Naive thymus-derived CD4-positive, alpha-beta T cell (primary cell): ENCODE measurements at regions of chr2 and their contacts with region 1.

Region 1: DNA sequence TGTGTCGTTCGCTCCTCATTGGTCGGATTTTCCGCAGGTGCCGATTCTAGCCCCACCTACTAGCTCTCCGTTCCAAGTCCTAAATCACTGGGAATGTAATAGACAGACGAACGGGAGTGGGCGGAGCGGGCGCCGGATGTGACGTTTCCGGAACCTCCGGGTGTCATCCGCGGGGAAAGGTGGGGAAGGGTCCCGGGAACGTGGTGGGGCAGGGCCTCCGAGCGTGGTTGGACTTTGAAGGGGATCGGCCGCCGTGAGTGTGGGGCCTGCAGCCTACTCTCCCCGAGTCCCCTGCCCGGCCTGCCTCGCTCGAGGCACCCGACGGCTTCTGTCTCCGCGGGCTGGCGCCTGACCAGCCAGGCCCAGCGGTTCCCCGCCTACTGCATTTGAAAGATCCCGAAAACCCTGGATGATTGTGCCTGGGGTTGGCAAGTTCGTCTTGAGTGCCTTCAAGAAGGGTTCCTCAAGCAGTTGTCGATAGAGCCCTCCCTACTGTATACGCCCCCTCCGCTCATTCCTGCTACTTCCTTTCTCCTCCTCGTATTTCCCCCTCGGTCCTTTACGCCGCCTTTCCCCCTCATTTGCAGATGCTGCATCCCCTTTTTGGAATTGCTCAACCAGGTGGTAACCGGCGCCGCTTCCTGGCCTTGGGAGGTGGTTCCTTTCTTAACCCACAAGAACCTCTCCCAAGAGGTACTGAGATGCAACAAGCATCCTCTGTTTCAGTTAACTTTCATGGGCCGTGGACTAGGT is at the start of gene STAMBP:
- DNase-seq: peak; percentile 67 to 95 (median 86)
- ATAC-seq: peak; percentile 96
- H3K4me3 ChIP-seq: peak within 1 kb of the TSS; percentile 81
- H3K4me3 Mint-ChIP-seq: peak within 1 kb of the TSS; percentile 93 to 99 (median 97)
- H3K27ac ChIP-seq: peak within 1 kb of the TSS; percentile 97
- H3K27ac Mint-ChIP-seq: peak within 1 kb of the TSS; percentile 88 to 99 (median 95)
- H3K4me1 ChIP-seq: peaks cover 22 to 25% of the 10 kb centered on the region in 2 donors
- H3K4me1 Mint-ChIP-seq: peaks cover 24 to 58% (median 52%) of the 10 kb centered on the region in 7 donors
- H3K27me3 ChIP-seq: no peaks in the 10 kb centered on the region
- H3K27me3 Mint-ChIP-seq: peaks cover 0 to 3% (median 0%) of the 10 kb centered on the region in 5 donors
- total RNA-seq, gene STAMBP: 22.2 to 44.5 (median 32.9) TPM

Region 2: GRCh38 chr2:72008608-72009007 is 1820.4 kb before region 1 on chr2:
- CTCF ChIA-PET with region 1: no interaction called
- POLR2A ChIA-PET with region 1: no interaction called
- intact Hi-C with region 1: no loop called
- DNase-seq: no peak
- ATAC-seq: no peak
- H3K4me3 ChIP-seq: no peak overlapping the region
- H3K4me3 Mint-ChIP-seq: no peak overlapping the region
- H3K27ac ChIP-seq: no peak overlapping the region
- H3K27ac Mint-ChIP-seq: no peak overlapping the region
- H3K4me1 ChIP-seq: no peaks in the 10 kb centered on the region
- H3K4me1 Mint-ChIP-seq: no peaks in the 10 kb centered on the region
- H3K27me3 ChIP-seq: no peaks in the 10 kb centered on the region
- H3K27me3 Mint-ChIP-seq: peaks cover 0 to 25% (median 6%) of the 10 kb centered on the region in 5 donors

Region 3: DNA sequence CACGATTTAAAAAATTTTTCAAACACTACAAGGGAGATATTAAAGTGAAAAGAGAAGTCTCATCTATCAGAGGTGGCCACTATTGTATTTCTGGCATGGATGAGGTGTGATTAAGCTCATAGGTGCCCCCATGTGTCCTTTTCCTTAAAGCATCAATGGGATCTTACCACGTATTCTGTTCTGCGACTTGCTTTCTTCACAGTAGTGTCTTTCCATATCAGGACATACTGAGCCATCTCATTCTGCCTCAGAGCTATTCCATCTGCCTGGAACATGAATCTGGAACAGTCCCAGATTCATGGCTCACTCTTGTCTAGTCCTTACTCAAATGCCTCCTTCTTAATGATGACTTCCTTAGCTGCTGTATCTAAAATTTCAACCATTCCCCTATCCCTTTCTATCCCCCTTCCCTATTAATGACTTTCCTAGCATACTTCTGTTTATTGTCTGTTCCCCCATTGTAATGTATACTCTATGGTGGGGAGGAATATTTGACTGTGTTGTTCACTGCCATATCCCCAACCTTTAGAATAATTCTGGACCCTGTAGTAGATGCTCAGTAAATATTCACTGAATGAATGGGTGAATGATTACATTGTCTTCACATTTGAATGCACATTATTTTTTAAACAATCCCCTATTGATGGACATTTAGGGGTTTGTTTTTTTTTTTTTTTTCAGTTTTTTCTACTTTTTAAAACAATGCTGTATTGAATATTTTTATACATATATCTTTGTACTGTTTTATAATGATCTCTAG is 10.8 kb after region 1 on chr2:
- CTCF ChIA-PET with region 1: interaction called, 11 read pairs
- POLR2A ChIA-PET with region 1: interaction called, 4 read pairs
- intact Hi-C with region 1: no loop called
- DNase-seq: no peak
- ATAC-seq: no peak
- H3K4me3 ChIP-seq: no peak overlapping the region
- H3K4me3 Mint-ChIP-seq: no peak overlapping the region
- H3K27ac ChIP-seq: no peak overlapping the region
- H3K27ac Mint-ChIP-seq: no peak overlapping the region
- H3K4me1 ChIP-seq: no peaks in the 10 kb centered on the region
- H3K4me1 Mint-ChIP-seq: peaks cover 15 to 50% (median 28%) of the 10 kb centered on the region in 7 donors
- H3K27me3 ChIP-seq: no peaks in the 10 kb centered on the region
- H3K27me3 Mint-ChIP-seq: no peaks in the 10 kb centered on the region

Region 4: DNA sequence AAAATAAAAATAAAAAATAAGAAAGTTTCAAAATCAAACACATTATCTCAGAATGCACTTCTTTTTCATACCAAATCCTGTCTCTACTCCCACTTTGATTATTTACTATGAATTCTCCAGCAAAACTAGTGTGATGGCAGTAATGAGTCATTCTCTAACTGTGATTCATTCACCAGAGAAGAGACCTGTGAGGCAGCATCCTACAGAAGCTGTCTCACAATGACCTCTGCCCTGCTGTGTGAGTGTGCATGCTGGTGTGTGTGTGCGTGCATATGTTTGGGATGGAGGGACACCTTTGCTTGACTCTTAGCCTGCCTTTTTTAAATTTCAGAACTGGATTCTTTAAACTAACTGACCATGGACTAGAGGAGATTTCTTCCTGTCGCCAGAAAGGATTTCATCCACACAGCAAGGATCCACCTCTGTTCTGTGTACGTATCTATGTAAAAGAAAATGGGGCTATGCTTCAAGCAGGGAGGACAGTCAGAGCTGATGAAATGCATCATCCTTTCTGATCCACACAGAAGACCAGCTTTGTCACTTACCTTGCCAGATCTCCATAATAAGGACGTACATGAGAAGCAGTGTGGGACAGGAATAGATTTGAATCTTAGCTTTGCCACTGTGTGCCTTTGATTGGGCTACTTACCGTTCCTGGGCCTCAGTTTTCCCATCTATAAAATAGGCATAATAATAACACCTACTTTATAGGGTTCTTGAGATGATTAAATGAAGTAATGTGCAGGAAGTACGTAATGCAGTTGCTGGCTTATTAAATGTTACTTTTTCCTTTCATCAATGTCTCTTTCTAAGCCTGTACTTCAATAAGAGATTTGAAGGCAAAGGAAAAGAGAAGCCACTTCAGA is 31.0 kb after region 1 on chr2:
- CTCF ChIA-PET with region 1: no interaction called
- POLR2A ChIA-PET with region 1: no interaction called
- intact Hi-C with region 1: no loop called
- DNase-seq: peak in 1 of 9 donors; percentile 34
- ATAC-seq: no peak
- H3K4me3 ChIP-seq: no peak overlapping the region
- H3K4me3 Mint-ChIP-seq: no peak overlapping the region
- H3K27ac ChIP-seq: no peak overlapping the region
- H3K27ac Mint-ChIP-seq: no peak overlapping the region
- H3K4me1 ChIP-seq: no peaks in the 10 kb centered on the region
- H3K4me1 Mint-ChIP-seq: peaks cover 0 to 8% (median 0%) of the 10 kb centered on the region in 7 donors
- H3K27me3 ChIP-seq: no peaks in the 10 kb centered on the region
- H3K27me3 Mint-ChIP-seq: no peaks in the 10 kb centered on the region

Region 5: DNA sequence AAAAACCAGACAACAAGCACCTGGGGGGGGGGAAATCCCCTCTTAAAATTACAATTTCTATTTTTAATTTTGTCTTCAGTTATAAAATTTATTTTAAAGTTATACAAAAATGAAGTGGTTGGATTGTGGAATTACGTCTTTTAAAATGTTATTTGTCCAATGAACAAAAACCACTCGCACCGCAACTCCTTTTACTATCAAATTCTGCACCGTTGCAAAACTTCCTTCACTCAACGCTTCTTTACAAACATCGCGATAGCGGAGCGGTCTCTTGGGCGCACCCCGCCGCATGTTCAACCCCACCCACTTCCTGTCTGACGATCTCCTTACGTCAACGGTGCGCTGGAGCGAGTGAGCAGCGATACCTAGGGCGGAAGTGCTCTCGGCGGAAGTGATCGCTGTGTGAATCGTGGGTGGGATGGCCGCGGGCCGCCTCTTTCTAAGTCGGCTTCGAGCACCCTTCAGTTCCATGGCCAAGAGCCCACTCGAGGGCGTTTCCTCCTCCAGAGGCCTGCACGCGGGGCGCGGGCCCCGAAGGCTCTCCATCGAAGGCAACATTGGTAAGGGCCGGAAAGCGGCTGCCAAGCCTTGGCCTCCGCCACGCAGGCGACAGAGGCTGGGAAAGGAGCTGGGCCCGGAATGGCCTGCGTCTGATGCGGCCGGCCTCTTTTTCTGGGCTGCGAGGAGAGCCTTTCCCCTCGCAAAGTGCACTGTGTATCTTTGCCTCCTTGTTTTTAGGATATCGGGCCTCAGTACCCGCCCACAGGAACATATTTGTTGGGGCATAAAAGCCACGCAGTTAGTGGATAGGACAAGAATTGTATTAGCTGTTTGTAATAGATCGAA is 97.7 kb after region 1 on chr2 and contains the start of gene DGUOK:
- CTCF ChIA-PET with region 1: interaction called, 3 read pairs
- POLR2A ChIA-PET with region 1: interaction called, 4 read pairs
- intact Hi-C with region 1: loop called (anchors 1 kb)
- DNase-seq: peak; percentile 81 to 99 (median 98)
- ATAC-seq: peak; percentile 99
- H3K4me3 ChIP-seq: peak within 1 kb of the TSS; percentile 87
- H3K4me3 Mint-ChIP-seq: peak within 1 kb of the TSS; percentile 80 to 97 (median 92)
- H3K27ac ChIP-seq: peak within 1 kb of the TSS; percentile 98
- H3K27ac Mint-ChIP-seq: peak within 1 kb of the TSS; percentile 79 to 99 (median 98)
- H3K4me1 ChIP-seq: peaks cover 37 to 41% of the 10 kb centered on the region in 2 donors
- H3K4me1 Mint-ChIP-seq: peaks cover 35 to 57% (median 52%) of the 10 kb centered on the region in 7 donors
- H3K27me3 ChIP-seq: no peaks in the 10 kb centered on the region
- H3K27me3 Mint-ChIP-seq: no peaks in the 10 kb centered on the region
- total RNA-seq, gene DGUOK: 43.1 to 73.9 (median 65.8) TPM

Region 6: DNA sequence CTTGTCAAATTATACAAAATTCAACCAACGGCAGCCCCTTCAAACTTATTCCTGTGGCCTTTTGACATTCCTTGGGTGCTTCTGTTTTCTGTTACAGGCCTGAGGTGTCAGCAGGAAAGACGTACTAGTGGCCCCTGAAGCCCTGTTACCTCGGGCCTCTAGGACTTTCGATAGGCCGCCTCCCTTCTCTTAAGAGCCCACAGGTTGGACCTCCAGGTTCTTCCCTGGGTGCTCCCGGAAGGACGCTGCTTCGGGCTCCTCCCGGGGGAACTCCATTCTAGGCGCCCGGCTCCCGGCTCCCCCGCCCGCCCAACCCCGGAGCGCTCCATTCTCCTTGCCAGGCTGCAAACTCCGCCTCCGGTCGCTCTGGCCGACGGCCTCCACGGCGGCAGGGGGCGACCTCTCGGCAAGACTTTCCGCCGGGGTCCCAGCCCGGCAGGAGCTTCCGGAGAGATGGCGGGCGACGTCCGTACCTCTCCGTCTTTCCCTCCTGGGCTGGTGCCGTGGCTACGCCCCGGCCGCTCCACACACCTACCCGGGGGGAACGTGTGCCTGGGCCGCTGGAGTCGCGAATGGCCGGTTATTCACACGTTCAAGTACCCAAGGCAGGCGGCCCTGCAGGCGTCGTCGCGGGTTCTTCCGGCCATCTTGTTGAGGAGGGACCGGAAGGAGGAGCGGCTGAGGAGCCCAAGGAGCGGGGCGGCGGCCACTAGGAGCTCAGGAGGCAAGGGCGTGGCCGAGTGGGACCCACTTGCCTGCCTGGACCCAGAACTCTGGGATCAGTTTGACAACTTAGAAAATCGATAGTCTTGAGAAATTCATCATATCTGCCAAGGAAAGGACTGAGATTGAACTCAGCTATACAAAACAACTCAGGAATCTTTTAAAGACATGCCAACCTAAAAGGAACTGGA is 291.2 kb after region 1 on chr2:
- CTCF ChIA-PET with region 1: interaction called, 3 read pairs
- POLR2A ChIA-PET with region 1: interaction called, 10 read pairs
- intact Hi-C with region 1: loop called (anchors 1 kb)
- DNase-seq: peak; percentile 69 to 91 (median 80)
- ATAC-seq: peak; percentile 98
- H3K4me3 ChIP-seq: peak overlapping the region; percentile 89
- H3K4me3 Mint-ChIP-seq: peak overlapping the region; percentile 82 to 92 (median 88)
- H3K27ac ChIP-seq: peak overlapping the region; percentile 83
- H3K27ac Mint-ChIP-seq: peak overlapping the region; percentile 79 to 96 (median 91)
- H3K4me1 ChIP-seq: no peaks in the 10 kb centered on the region
- H3K4me1 Mint-ChIP-seq: peaks cover 8 to 12% (median 9%) of the 10 kb centered on the region in 7 donors
- H3K27me3 ChIP-seq: no peaks in the 10 kb centered on the region
- H3K27me3 Mint-ChIP-seq: peaks cover 0 to 5% (median 2%) of the 10 kb centered on the region in 5 donors

Region 7: GRCh38 chr2:74198461-74199274 is 369.7 kb after region 1 on chr2 and contains the start of gene MTHFD2:
- CTCF ChIA-PET with region 1: interaction called, 3 read pairs
- POLR2A ChIA-PET with region 1: interaction called, 4 read pairs
- intact Hi-C with region 1: loop called in 1 of 2 experiments (anchors 1 kb)
- DNase-seq: peak; percentile 76 to 93 (median 82)
- ATAC-seq: peak; percentile 94
- H3K4me3 ChIP-seq: peak within 1 kb of the TSS; percentile 65
- H3K4me3 Mint-ChIP-seq: peak within 1 kb of the TSS; percentile 90 to 100 (median 96)
- H3K27ac ChIP-seq: peak within 1 kb of the TSS; percentile 88
- H3K27ac Mint-ChIP-seq: peak within 1 kb of the TSS; percentile 94 to 100 (median 97)
- H3K4me1 ChIP-seq: peaks cover 13 to 16% of the 10 kb centered on the region in 2 donors
- H3K4me1 Mint-ChIP-seq: peaks cover 29 to 50% (median 35%) of the 10 kb centered on the region in 7 donors
- H3K27me3 ChIP-seq: no peaks in the 10 kb centered on the region
- H3K27me3 Mint-ChIP-seq: no peaks in the 10 kb centered on the region
- total RNA-seq, gene MTHFD2: 14.5 to 186 (median 25.1) TPM

Region 8: DNA sequence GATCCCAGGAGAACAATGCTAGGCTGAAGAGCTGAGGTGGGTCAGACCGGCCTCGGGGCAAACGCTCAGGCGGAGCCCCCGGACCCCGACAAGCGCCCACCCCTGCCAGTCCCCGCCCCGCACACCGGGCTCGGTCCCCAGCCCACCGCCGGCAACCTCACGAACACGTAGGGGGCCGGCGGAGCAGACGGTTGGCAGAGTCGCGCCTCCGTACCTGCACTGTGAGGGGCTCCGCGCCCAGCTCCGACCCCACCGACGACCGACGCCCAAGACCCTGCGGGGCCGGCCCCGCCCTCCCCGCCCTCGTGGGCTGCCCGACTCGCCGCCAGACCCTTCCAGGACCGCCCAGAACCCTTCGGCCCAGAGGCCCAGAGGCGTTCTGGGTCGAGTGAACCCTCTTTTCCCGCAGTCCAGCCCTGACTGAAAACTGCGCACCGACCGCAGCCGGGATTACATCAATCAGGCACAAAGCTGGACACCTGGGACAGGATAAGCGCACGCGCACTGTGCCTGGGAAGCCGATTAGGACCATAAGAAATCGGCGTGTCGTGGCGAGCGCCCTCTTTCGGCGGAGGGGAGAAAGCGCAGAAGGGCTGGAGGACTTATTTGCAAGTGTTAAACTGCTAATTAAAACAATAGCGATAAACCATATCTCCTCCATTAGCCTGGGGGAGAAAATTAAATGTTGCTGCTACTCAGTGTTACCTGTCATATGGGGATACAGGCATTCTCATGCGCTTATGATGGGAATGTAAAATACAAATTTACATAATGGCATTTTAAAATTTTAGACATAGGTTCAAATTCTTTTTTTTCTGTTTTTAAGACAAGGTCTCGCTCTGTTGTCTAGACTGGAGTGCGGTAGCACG is 562.8 kb after region 1 on chr2:
- CTCF ChIA-PET with region 1: interaction called, 4 read pairs
- POLR2A ChIA-PET with region 1: interaction called, 6 read pairs
- intact Hi-C with region 1: loop called (anchors 1 to 2 kb)
- DNase-seq: peak; percentile 89 to 99 (median 93)
- ATAC-seq: peak; percentile 97
- H3K4me3 ChIP-seq: peak overlapping the region; percentile 78
- H3K4me3 Mint-ChIP-seq: peak overlapping the region in 4 of 10 donors; percentile 40 to 100 (median 92)
- H3K27ac ChIP-seq: peak overlapping the region; percentile 91
- H3K27ac Mint-ChIP-seq: peak overlapping the region in 8 of 9 donors; percentile 98 to 100 (median 99)
- H3K4me1 ChIP-seq: peaks cover 8 to 25% of the 10 kb centered on the region in 2 donors
- H3K4me1 Mint-ChIP-seq: peaks cover 0 to 15% (median 5%) of the 10 kb centered on the region in 7 donors
- H3K27me3 ChIP-seq: no peaks in the 10 kb centered on the region
- H3K27me3 Mint-ChIP-seq: peaks cover 0 to 14% (median 5%) of the 10 kb centered on the region in 5 donors

Region 9: DNA sequence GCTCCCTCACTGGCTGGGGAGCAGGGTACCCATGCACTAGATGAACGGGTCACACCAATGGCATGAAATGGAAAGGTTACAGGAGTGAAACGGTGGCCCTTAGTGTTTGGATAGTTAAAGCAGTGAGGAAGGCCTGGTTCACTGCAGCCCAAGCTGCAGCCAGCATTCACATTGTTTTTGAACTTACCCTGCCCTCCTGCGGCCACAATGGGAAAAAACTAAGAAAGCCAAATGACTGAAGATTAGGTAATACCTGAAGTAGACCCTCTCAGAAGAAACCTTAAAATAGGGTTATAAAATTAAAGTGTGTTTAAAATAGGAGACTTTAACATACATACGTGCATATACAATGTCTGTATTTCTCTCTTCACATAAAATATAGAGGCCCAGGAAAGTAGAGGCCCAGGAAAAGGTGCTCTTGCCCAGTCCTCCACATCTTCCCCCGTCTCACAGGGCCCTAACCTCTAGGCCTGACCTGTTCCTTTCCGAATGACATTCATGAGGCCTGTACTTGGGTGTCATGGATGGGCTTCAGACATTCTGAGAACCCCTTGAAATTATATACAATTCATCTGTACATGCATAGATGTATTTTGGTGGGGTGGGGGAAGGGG is 758.8 kb after region 1 on chr2:
- CTCF ChIA-PET with region 1: interaction called, 3 read pairs
- POLR2A ChIA-PET with region 1: no interaction called
- intact Hi-C with region 1: loop called in 1 of 2 experiments (anchors 1 kb)
- DNase-seq: peak; percentile 27 to 74 (median 63)
- ATAC-seq: peak; percentile 85
- H3K4me3 ChIP-seq: no peak overlapping the region
- H3K4me3 Mint-ChIP-seq: no peak overlapping the region
- H3K27ac ChIP-seq: no peak overlapping the region
- H3K27ac Mint-ChIP-seq: peak overlapping the region in 1 of 9 donors; percentile 30
- H3K4me1 ChIP-seq: no peaks in the 10 kb centered on the region
- H3K4me1 Mint-ChIP-seq: peaks cover 8 to 35% (median 15%) of the 10 kb centered on the region in 7 donors
- H3K27me3 ChIP-seq: no peaks in the 10 kb centered on the region
- H3K27me3 Mint-ChIP-seq: peaks cover 8 to 26% (median 17%) of the 10 kb centered on the region in 5 donors